ENCODE measurements at regions of chr12 and their contacts with region 1.

Region 1: DNA sequence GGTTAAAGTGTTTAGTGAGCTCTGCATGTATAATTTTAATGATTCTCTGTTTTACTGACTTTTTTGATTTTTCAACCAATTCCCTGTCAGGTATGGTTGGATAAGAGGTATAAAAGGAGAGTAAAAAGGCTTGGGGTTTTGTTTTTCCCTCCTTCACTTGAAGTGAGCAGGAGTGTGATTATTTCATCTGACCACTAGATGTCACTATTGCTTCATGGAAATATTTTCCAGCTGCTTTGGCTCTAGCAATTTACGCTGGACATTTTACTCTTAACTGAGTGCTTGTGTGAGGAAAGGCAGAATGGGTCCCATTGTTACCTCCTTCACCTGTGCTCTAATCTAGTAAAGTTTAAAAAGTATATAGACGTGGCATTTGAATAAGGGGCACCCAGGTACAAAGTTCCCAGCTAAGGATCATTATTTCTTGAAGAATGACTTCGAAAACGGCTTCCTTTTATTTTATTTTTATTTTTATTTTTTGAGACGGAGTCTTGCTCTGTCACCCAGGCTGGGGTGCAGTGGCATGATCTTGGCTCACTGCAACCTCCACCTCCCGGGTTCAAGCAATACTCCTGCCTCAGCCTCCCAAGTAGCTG is 66.5 kb downstream of the TBC1D30 start:
- DNase-seq: no peak
- H3K4me3 ChIP-seq: no peak overlapping the region
- H3K27ac ChIP-seq: no peak overlapping the region
- H3K4me1 ChIP-seq: no peaks in the 10 kb centered on the region
- H3K27me3 ChIP-seq: no peaks in the 10 kb centered on the region
- CTCF ChIP-seq: peak; percentile 80

Region 2: DNA sequence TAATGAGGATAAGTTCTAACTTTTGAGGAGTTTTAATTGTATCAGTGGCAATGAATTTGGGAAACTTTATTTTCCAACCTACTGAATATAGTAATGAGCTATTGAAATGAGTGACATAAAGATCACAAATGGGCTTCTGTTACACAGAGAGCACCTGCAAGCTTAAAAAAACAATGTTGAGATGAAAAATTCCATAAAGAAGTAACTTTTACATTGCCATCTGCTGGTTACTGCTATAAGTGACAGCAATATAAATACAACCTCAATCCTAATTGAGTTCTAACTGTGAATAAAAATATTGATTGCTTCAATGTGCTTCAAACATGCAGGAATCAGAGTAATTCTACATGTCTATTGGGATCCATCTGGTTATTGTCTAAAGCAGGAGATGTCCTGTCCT is 216.0 kb after region 1 on chr12:
- intact Hi-C with region 1: loop called (anchors 5 kb)
- DNase-seq: no peak
- H3K4me3 ChIP-seq: no peak overlapping the region
- H3K27ac ChIP-seq: no peak overlapping the region
- H3K4me1 ChIP-seq: no peaks in the 10 kb centered on the region
- H3K27me3 ChIP-seq: no peaks in the 10 kb centered on the region
- CTCF ChIP-seq: peak; percentile 17

Region 3: DNA sequence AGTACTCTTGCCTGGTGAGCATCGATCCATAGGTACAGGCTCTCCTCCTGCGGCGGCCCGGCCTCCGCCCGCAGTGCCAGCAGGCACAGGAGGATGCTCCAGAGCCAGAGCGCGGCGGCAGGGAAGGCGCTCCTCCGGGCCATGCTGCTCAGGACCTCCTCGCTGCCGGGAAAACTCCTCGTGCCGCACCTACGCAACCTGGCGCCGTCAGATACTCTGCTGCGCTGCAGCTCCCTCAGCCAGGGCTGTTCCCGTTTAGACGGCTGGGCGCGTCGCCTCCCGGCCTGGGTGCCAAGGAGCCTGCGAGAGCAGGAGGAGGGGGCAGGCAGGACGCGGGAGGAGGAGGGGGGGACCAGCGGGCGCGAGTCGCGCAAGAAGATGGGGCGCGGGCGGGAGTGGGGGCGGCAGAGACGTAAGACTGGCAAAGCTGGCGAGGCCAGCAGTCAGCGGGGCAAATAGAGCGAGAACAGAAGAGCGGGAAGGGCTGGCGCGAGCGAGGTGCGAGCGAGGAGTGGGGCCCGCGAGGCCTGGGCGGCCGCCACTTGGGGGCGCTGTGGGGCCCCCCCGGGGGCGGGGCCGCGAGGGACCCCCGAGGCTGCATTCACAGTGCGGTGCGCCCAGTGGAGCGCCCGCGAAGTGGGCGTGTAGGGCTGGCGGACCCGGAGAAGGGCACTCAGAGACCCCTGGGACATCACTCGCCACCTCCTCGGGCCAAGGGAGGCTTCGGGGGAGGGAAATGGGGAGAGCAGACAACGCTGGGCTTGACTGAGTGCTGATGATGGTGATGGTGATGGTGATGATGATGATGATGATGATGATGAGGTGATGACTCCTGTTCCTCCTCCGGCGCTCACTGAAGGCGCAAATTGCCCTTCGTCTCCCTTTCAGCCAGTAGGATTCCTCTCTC is 230.3 kb after region 1 on chr12 and contains the start of gene WIF1:
- intact Hi-C with region 1: loop called (anchors 5 kb)
- DNase-seq: no peak
- H3K4me3 ChIP-seq: peak within 1 kb of the TSS; percentile 19
- H3K27ac ChIP-seq: no peak within 1 kb of the TSS
- H3K4me1 ChIP-seq: peaks cover 10% of the 10 kb centered on the region
- H3K27me3 ChIP-seq: peaks cover 36% of the 10 kb centered on the region
- CTCF ChIP-seq: peak; percentile 27
- total RNA-seq, gene WIF1: 0.20 TPM in 1 of 2 donors, not detected in the other

Region 4: GRCh38 chr12:65229441-65229840 is 338.5 kb after region 1 on chr12:
- intact Hi-C with region 1: loop called (anchors 2 kb)
- DNase-seq: no peak
- H3K4me3 ChIP-seq: no peak overlapping the region
- H3K27ac ChIP-seq: no peak overlapping the region
- H3K4me1 ChIP-seq: no peaks in the 10 kb centered on the region
- H3K27me3 ChIP-seq: no peaks in the 10 kb centered on the region
- CTCF ChIP-seq: no peak

Region 5: GRCh38 chr12:65259501-65259900 is 368.5 kb after region 1 on chr12:
- intact Hi-C with region 1: no loop called
- DNase-seq: no peak
- H3K4me3 ChIP-seq: no peak overlapping the region
- H3K27ac ChIP-seq: no peak overlapping the region
- H3K4me1 ChIP-seq: no peaks in the 10 kb centered on the region
- H3K27me3 ChIP-seq: no peaks in the 10 kb centered on the region
- CTCF ChIP-seq: no peak

Measured in colonic mucosa (tissue), 4 donors.